BJ (cell line): ENCODE measurements at regions of chr4 and their contacts with region 1.

Region 1: GRCh38 chr4:185424905-185425646 is 688 bp downstream of the UFSP2 start:
- DNase-seq: peak; percentile 11
- H3K4me3 ChIP-seq: peak overlapping the region; percentile 93
- H3K27me3 ChIP-seq: no peaks in the 10 kb centered on the region
- CTCF ChIP-seq: no peak

Region 2: GRCh38 chr4:185405296-185405999 is 19.6 kb before region 1 on chr4:
- CTCF ChIA-PET with region 1: no interaction called
- POLR2A ChIA-PET with region 1: interaction called, 28 read pairs
- DNase-seq: no peak
- H3K4me3 ChIP-seq: no peak overlapping the region
- H3K27me3 ChIP-seq: no peaks in the 10 kb centered on the region
- CTCF ChIP-seq: no peak